AG04450 (cell line): ENCODE measurements at regions of chr3 and their contacts with region 1.

Region 1: GRCh38 chr3:134308350-134308891 is 57.8 kb upstream of the RYK start:
- DNase-seq: peak; percentile 59
- H3K4me3 ChIP-seq: peak overlapping the region; percentile 31; the same call in 1 of the 2 replicates
- H3K27ac ChIP-seq: peak overlapping the region; percentile 52
- H3K27me3 ChIP-seq: no peaks in the 10 kb centered on the region
- CTCF ChIP-seq: peak; percentile 100

Region 2: GRCh38 chr3:134277066-134277660 is 31.3 kb before region 1 on chr3:
- CTCF ChIA-PET with region 1: interaction called, 11 read pairs
- POLR2A ChIA-PET with region 1: no interaction called
- DNase-seq: no peak
- H3K4me3 ChIP-seq: no peak overlapping the region
- H3K27ac ChIP-seq: no peak overlapping the region
- H3K27me3 ChIP-seq: peaks cover 7% of the 10 kb centered on the region
- CTCF ChIP-seq: no peak

Region 3: DNA sequence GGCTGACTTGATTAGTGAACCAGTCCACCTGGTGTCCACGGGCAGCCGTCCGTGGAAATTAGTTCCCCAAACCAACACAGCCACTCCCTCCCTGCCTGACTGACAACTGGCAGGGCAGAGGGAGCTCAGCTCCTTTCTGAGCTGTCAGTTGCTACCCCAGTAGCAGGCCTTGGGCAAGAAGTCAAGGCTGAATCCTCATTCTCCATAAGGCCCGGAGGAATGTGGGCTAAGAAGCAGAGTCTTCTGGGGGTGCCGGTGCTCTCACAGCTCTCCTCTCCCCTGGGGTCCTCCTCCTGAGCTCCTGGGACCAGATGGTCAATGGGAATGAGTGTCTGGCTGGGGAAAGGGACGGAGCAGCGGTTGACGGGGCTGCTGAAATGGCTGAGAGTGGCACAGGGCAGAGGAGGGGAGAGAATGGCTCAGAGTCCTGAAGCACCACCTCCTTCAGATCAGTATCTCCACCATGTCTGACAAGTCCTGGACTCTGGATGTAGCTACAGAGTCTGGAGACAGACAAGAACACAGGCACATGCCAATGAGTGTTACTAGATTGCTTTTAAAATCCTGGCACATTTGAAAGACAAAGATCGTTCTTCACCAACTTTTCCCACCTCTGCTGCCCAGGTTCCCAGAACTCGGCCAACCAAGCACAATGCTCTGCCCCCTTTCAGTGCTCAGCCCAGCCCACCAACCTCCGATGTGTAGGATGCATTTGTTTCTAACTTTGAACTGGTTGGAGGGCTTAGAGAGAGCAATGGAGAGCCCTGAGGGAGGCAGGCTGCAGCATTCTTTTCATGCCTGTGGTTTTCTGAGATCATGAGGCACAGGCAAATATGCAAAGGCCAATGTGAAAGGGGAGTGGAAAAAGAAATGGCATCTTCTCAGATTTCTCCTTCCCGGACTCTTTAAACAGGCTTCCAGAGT is 49.1 kb after region 1 on chr3:
- CTCF ChIA-PET with region 1: interaction called, 55 read pairs
- POLR2A ChIA-PET with region 1: interaction called, 46 read pairs
- DNase-seq: peak; percentile 96
- H3K4me3 ChIP-seq: peak overlapping the region; percentile 13
- H3K27ac ChIP-seq: peak overlapping the region; percentile 98
- H3K27me3 ChIP-seq: no peaks in the 10 kb centered on the region
- CTCF ChIP-seq: no peak

Region 4: GRCh38 chr3:134373994-134374790 is 65.8 kb after region 1 on chr3 and contains the start of gene AMOTL2:
- CTCF ChIA-PET with region 1: interaction called, 21 read pairs
- POLR2A ChIA-PET with region 1: interaction called, 16 read pairs
- DNase-seq: peak; percentile 95
- H3K4me3 ChIP-seq: peak within 1 kb of the TSS; percentile 98
- H3K27ac ChIP-seq: peak within 1 kb of the TSS; percentile 100
- H3K27me3 ChIP-seq: no peaks in the 10 kb centered on the region
- CTCF ChIP-seq: no peak
- polyA plus RNA-seq, gene AMOTL2: 74.5 and 78.9 TPM in 2 replicates

Region 5: DNA sequence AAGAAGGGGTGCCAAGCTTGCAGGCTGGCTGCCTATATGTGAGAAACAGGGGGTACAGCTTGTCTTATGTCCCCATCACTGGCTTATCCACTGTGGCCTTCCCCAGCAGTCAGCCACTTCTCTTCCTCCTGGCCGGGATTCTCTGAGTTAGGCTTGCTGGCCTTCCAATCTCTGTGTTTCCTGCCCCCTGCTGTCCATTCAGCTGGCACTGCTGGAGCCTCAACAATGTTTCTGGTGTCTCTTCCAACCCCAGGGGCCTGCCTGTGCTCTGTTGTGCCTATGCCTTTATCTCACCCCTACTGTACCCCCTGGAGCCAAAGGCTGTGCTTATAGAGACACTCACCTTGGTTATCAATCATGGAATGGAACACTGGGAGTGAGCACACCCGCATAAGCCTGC is 140.9 kb after region 1 on chr3:
- CTCF ChIA-PET with region 1: interaction called, 11 read pairs
- POLR2A ChIA-PET with region 1: no interaction called
- DNase-seq: no peak
- H3K4me3 ChIP-seq: no peak overlapping the region
- H3K27ac ChIP-seq: no peak overlapping the region
- H3K27me3 ChIP-seq: no peaks in the 10 kb centered on the region
- CTCF ChIP-seq: peak; percentile 44

Region 6: GRCh38 chr3:134473868-134474546 is 165.6 kb after region 1 on chr3:
- CTCF ChIA-PET with region 1: interaction called, 306 read pairs
- POLR2A ChIA-PET with region 1: interaction called, 7 read pairs
- DNase-seq: peak; percentile 66
- H3K4me3 ChIP-seq: no peak overlapping the region
- H3K27ac ChIP-seq: no peak overlapping the region
- H3K27me3 ChIP-seq: no peaks in the 10 kb centered on the region
- CTCF ChIP-seq: peak; percentile 72